ENCODE measurements at regions of chr17 and their contacts with region 1.

Region 1: DNA sequence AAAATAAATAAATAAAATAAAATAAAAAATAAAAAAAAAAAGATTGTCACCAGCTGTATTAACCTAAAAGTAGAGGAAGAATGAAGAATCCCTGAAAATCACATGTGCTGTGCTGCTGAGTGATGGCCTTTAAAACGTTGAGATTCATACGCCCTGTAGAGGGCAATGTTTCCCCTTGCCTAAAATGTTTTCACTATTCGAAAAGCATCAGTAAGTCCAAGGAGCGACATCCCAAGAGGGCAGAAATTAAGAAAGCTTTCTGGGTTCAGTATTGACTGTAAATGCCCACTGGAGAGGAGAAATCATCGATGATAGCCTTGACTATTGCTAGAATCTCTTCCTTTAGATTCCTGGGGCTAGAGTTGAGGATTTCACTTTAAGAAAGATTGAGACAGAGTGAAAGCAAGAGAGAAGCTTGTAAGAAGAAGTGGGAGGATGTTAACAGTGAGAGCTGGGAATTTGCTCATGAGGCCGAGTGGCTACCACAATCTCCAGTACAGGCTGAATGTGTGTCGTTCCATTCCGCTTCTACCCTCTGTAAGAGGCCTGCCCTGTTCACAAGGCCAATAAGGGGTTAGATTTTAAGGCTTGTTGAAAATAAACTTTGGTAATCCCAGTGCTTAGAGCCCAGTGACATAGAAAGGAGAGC is 170.8 kb upstream of the FAM20A start:
- DNase-seq: peak in 2 of 9 donors; percentile 7 to 9
- ATAC-seq: peak; percentile 77
- H3K4me3 ChIP-seq: no peak overlapping the region
- H3K4me3 Mint-ChIP-seq: peak overlapping the region in 8 of 10 donors; percentile 12 to 68 (median 38)
- H3K27ac ChIP-seq: no peak overlapping the region
- H3K27ac Mint-ChIP-seq: no peak overlapping the region
- H3K4me1 ChIP-seq: no peaks in the 10 kb centered on the region
- H3K4me1 Mint-ChIP-seq: peaks cover 0 to 5% (median 0%) of the 10 kb centered on the region in 7 donors
- H3K27me3 ChIP-seq: no peaks in the 10 kb centered on the region
- H3K27me3 Mint-ChIP-seq: peaks cover 0 to 5% (median 0%) of the 10 kb centered on the region in 5 donors

Region 2: DNA sequence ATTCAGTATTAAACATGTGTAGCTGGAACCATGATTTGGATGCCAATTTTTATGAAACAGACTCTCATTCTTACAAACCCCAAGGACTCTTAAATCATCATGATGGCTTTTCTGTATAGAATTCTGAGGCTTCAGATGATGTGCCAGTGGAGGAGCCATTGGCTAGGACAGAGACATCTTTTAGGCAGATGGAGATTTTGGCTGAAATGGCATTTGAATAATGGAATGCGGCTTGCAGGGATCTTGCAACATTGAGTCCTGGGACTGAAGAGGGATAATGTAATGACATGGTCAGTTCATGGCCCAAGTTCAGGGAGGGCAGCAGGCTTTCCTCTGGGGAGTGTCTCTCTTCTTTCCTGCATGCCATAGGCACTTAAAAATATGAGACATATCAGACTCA is 10.8 kb after region 1 on chr17:
- CTCF ChIA-PET with region 1: no interaction called
- POLR2A ChIA-PET with region 1: no interaction called
- intact Hi-C with region 1: no loop called
- DNase-seq: no peak
- ATAC-seq: no peak
- H3K4me3 ChIP-seq: no peak overlapping the region
- H3K4me3 Mint-ChIP-seq: no peak overlapping the region
- H3K27ac ChIP-seq: no peak overlapping the region
- H3K27ac Mint-ChIP-seq: no peak overlapping the region
- H3K4me1 ChIP-seq: no peaks in the 10 kb centered on the region
- H3K4me1 Mint-ChIP-seq: no peaks in the 10 kb centered on the region
- H3K27me3 ChIP-seq: peaks cover 0 to 4% of the 10 kb centered on the region in 2 donors
- H3K27me3 Mint-ChIP-seq: peaks cover 14 to 37% (median 33%) of the 10 kb centered on the region in 5 donors

Region 3: DNA sequence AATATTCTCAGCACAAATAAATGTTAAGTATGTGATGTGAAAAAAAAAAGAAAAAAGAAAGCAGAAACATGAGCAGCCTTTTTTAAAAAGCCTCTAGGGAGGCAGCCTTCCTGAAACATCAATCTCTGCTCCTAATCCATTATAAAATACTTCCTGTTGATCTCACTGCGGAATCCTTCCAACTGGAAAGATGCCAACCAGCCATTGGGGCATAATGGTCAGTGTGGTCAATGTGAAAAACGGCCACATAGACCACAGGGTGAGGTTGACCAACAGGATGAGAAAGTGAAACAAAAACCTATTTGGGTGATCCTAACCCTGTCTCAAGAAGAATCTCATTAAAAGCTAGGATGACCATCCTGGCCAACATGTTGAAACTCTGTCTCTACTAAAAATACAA is 209.3 kb after region 1 on chr17:
- CTCF ChIA-PET with region 1: no interaction called
- POLR2A ChIA-PET with region 1: no interaction called
- intact Hi-C with region 1: no loop called
- DNase-seq: no peak
- ATAC-seq: no peak
- H3K4me3 ChIP-seq: no peak overlapping the region
- H3K4me3 Mint-ChIP-seq: no peak overlapping the region
- H3K27ac ChIP-seq: no peak overlapping the region
- H3K27ac Mint-ChIP-seq: no peak overlapping the region
- H3K4me1 ChIP-seq: no peaks in the 10 kb centered on the region
- H3K4me1 Mint-ChIP-seq: peaks cover 0 to 4% (median 0%) of the 10 kb centered on the region in 7 donors
- H3K27me3 ChIP-seq: no peaks in the 10 kb centered on the region
- H3K27me3 Mint-ChIP-seq: peaks cover 0 to 20% (median 7%) of the 10 kb centered on the region in 5 donors

Region 4: GRCh38 chr17:69235338-69235930 is 463.4 kb after region 1 on chr17:
- CTCF ChIA-PET with region 1: interaction called, 3 read pairs
- POLR2A ChIA-PET with region 1: no interaction called
- intact Hi-C with region 1: loop called in 1 of 2 experiments (anchors 1 kb)
- DNase-seq: peak in 8 of 9 donors; percentile 18 to 64 (median 36)
- ATAC-seq: peak; percentile 79
- H3K4me3 ChIP-seq: no peak overlapping the region
- H3K4me3 Mint-ChIP-seq: no peak overlapping the region
- H3K27ac ChIP-seq: no peak overlapping the region
- H3K27ac Mint-ChIP-seq: no peak overlapping the region
- H3K4me1 ChIP-seq: no peaks in the 10 kb centered on the region
- H3K4me1 Mint-ChIP-seq: peaks cover 0 to 3% (median 0%) of the 10 kb centered on the region in 7 donors
- H3K27me3 ChIP-seq: no peaks in the 10 kb centered on the region
- H3K27me3 Mint-ChIP-seq: peaks cover 0 to 8% (median 0%) of the 10 kb centered on the region in 5 donors

Region 5: GRCh38 chr17:69388822-69389442 is 616.9 kb after region 1 on chr17:
- CTCF ChIA-PET with region 1: no interaction called
- POLR2A ChIA-PET with region 1: no interaction called
- intact Hi-C with region 1: loop called in 1 of 2 experiments (anchors 5 kb)
- DNase-seq: no peak
- ATAC-seq: no peak
- H3K4me3 ChIP-seq: no peak overlapping the region
- H3K4me3 Mint-ChIP-seq: no peak overlapping the region
- H3K27ac ChIP-seq: no peak overlapping the region
- H3K27ac Mint-ChIP-seq: no peak overlapping the region
- H3K4me1 ChIP-seq: no peaks in the 10 kb centered on the region
- H3K4me1 Mint-ChIP-seq: no peaks in the 10 kb centered on the region
- H3K27me3 ChIP-seq: no peaks in the 10 kb centered on the region
- H3K27me3 Mint-ChIP-seq: peaks cover 3 to 29% (median 10%) of the 10 kb centered on the region in 5 donors